Endothelial cell of umbilical vein (primary cell): ENCODE measurements at regions of chr21 and their contacts with region 1.

Region 1: DNA sequence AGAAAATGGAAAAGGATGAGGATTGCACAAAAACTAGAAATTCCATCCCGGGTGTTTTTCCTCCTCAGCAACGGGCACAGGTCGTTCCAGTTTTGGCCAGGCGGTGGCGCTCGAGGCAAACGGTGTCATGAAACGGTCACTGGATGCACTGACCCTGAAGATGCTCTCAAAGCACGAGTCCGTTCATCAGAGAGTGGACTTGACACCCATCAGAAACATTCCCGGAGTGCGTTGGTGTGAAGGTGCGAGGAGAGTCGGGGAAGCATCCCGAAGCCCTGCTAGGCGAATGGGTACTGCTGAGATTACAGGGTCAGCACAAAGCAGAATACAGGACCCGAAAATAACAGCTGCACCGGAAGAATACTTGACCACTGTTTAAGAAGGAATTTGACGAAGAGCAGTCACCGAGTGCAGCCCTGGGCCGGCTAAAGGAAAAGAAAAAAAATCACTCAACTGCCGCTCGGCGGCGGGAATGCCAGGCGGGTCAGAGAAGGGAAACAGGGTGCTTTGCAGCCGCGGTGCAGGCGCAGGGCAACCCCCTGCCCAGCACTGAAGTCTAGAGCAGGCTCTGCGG is 71.7 kb upstream of the ETS2 start:
- DNase-seq: peak; percentile 87
- H3K4me3 ChIP-seq: peak overlapping the region in 2 of 3 experiments; percentile 1 to 31
- H3K27ac ChIP-seq: no peak overlapping the region
- H3K4me1 ChIP-seq: peaks cover 9% of the 10 kb centered on the region
- H3K27me3 ChIP-seq: peaks cover 3% of the 10 kb centered on the region in 2 experiments
- CTCF ChIP-seq: peak; percentile 91 to 94
- POLR2A ChIP-seq: no peak

Region 2: GRCh38 chr21:38797470-38797869 is 63.4 kb after region 1 on chr21:
- CTCF ChIA-PET with region 1: interaction called, 6 read pairs
- POLR2A ChIA-PET with region 1: no interaction called
- dilution Hi-C with region 1: no loop called
- intact Hi-C with region 1: loop called (anchors 2 kb)
- DNase-seq: no peak
- H3K4me3 ChIP-seq: no peak overlapping the region
- H3K27ac ChIP-seq: no peak overlapping the region
- H3K4me1 ChIP-seq: no peaks in the 10 kb centered on the region
- H3K27me3 ChIP-seq: no peaks in the 10 kb centered on the region
- CTCF ChIP-seq: no peak
- POLR2A ChIP-seq: no peak

Region 3: DNA sequence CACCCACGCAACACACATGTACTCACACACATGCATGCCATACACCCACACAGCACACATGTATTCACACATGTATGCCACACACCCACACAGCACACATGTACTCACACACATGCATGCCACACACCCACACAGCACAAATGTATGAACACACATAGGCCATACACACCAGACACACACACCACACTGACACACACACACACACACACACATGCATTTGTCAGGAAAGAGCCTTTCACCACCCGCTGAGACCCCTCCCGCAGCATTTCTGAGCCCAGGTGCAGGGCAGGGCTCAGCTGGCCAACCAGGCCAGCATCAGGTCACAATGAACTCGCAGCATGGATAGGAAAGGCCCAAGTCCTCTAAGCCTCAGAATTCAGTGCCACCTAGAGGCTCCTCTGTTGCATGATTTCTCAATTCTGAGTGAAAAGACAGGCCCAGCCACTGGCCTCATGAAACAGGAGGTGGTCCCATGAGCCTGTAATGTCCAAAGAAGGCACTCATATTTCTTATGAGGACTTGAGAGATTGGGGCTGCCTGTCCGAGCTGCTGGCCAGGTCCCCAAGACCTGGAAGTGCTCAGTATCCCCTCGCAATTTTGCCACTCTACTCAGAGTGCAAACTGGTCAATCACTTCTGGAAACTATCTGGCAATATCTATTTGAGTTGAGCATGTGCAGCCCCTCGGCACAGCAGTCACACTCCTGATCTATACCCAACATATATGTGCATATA is 391.9 kb after region 1 on chr21:
- CTCF ChIA-PET with region 1: interaction called, 19 read pairs
- POLR2A ChIA-PET with region 1: no interaction called
- dilution Hi-C with region 1: no loop called
- intact Hi-C with region 1: loop called (anchors 1 kb)
- DNase-seq: peak; percentile 68
- H3K4me3 ChIP-seq: no peak overlapping the region
- H3K27ac ChIP-seq: no peak overlapping the region
- H3K4me1 ChIP-seq: no peaks in the 10 kb centered on the region
- H3K27me3 ChIP-seq: peaks cover 0 to 2% of the 10 kb centered on the region in 2 experiments
- CTCF ChIP-seq: peak; percentile 51 to 73
- POLR2A ChIP-seq: no peak

Region 4: DNA sequence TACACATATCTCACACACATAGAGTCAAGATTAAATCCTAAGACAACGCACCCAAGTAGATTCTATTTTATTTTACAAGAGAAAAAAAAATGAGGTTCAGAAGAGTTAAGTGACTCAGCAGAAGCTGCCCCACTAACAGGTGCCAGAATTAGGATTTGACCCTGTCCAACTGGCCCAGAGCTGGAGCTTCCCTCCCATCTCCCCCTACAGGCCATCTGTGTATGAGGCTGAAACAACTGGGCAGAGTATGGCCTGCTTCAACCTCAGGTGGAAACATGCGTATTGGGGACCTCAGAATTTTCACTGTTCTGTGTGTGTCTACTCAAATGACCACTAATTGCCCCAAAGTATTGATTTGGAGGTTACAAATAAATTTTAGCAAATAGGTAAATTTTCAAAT is 419.3 kb after region 1 on chr21:
- CTCF ChIA-PET with region 1: interaction called, 5 read pairs
- POLR2A ChIA-PET with region 1: no interaction called
- dilution Hi-C with region 1: loop called (anchors 25 kb)
- intact Hi-C with region 1: no loop called
- DNase-seq: no peak
- H3K4me3 ChIP-seq: no peak overlapping the region
- H3K27ac ChIP-seq: no peak overlapping the region
- H3K4me1 ChIP-seq: no peaks in the 10 kb centered on the region
- H3K27me3 ChIP-seq: peaks cover 0 to 2% of the 10 kb centered on the region in 2 experiments
- CTCF ChIP-seq: peak; percentile 49 to 59
- POLR2A ChIP-seq: no peak